ENCODE measurements at regions of chr15 and their contacts with region 1.

Region 1: GRCh38 chr15:30962079-30962478 is 29.3 kb downstream of the MTMR10 start:
- DNase-seq: no peak
- H3K4me3 ChIP-seq: no peak overlapping the region
- H3K27ac ChIP-seq: no peak overlapping the region
- H3K4me1 ChIP-seq: no peaks in the 10 kb centered on the region
- H3K27me3 ChIP-seq: no peaks in the 10 kb centered on the region
- CTCF ChIP-seq: no peak
- POLR2A ChIP-seq: no peak

Region 2: DNA sequence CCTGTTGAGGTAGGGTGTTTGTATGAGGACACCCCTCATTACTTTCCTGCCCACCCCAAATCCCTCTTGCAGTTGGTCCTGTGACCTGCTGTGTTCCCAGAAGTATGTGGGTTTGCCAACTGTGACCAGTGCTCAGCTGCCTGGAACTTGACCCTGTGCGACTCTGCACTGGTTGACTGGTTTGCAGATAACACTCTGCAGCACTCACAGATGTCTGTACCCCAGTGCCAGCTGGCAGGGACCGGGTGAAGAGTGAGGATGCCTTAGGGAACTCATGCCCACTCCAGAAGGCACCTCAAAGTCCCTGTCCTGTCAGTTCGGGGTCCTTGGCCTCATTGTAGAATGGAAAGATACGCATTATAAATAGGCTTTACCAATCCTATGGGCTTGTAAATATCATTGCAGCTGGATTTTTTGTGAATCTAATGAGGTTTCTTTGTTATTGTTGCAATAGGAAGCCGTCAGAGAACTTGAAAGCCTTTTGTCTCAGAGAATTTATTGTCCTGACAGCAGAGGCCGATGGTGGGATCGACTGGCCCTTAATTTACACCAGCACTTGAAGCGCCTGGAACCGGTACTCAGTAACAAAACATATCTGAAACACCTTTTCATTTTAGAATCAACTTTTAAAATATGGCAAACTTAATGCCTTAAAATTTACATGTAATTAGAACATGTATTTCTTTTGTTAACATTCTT is 40.1 kb before region 1 on chr15:
- intact Hi-C with region 1: loop called (anchors 2 kb)
- DNase-seq: no peak
- H3K4me3 ChIP-seq: no peak overlapping the region
- H3K27ac ChIP-seq: peak overlapping the region; percentile 68 to 76
- H3K4me1 ChIP-seq: no peaks in the 10 kb centered on the region
- H3K27me3 ChIP-seq: no peaks in the 10 kb centered on the region
- CTCF ChIP-seq: no peak
- POLR2A ChIP-seq: no peak

Region 3: DNA sequence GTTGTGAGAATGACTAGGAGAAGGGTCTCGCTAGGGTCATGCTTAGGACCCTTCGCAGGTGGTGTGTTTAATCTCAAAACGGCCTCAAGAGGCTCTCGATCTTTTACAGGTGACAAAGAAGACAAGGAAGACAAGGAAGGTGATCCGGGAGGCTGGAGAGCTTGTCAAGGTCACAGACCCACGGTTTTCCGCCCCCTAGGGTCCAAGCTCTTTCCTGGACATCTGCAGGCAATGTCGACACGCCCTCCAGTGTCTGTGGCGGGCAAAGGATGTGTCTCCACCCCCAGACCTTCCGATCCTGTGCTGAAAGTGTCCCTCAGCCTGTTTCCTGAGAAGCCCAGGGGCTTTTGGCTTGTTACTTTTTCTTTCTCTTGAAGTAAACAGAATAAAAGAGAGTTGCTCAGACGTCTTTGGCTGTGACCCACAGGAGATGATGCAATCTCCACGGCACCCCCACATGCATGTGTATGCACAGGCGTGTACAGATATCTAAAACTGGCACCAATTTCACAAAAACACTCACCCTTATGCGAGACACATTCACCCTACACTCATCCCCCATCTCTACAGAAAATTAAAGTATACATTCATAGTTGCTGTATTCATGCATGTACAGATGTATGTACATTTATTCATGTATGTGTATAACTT is 473.3 kb after region 1 on chr15:
- intact Hi-C with region 1: no loop called
- DNase-seq: peak in 1 of 2 donors; percentile 76
- H3K4me3 ChIP-seq: peak overlapping the region; percentile 13 to 53 (median 24)
- H3K27ac ChIP-seq: peak overlapping the region; percentile 78 to 93
- H3K4me1 ChIP-seq: no peaks in the 10 kb centered on the region
- H3K27me3 ChIP-seq: no peaks in the 10 kb centered on the region
- CTCF ChIP-seq: peak; percentile 20 to 66 (median 62)
- POLR2A ChIP-seq: no peak

Region 4: GRCh38 chr15:32104061-32104995 is 1142.2 kb after region 1 on chr15:
- intact Hi-C with region 1: no loop called
- DNase-seq: no peak
- H3K4me3 ChIP-seq: no peak overlapping the region
- H3K27ac ChIP-seq: no peak overlapping the region
- H3K4me1 ChIP-seq: no peaks in the 10 kb centered on the region
- H3K27me3 ChIP-seq: no peaks in the 10 kb centered on the region
- CTCF ChIP-seq: no peak
- POLR2A ChIP-seq: no peak